GM10248 (cell line): ENCODE measurements at regions of chr18 and their contacts with region 1.

Region 1: GRCh38 chr18:44893045-44893706 is 212.5 kb downstream of the SETBP1 start:
- DNase-seq: no peak
- CTCF ChIP-seq: no peak

Region 2: GRCh38 chr18:44904768-44905167 is 11.6 kb after region 1 on chr18:
- CTCF ChIA-PET with region 1: interaction called, 21 read pairs
- POLR2A ChIA-PET with region 1: no interaction called
- DNase-seq: no peak
- CTCF ChIP-seq: no peak

Region 3: GRCh38 chr18:45197526-45197970 is 304.4 kb after region 1 on chr18:
- CTCF ChIA-PET with region 1: no interaction called
- POLR2A ChIA-PET with region 1: no interaction called
- DNase-seq: peak; percentile 39
- CTCF ChIP-seq: no peak